A549 (cell line): ENCODE measurements at regions of chr2 and their contacts with region 1.

Region 1: GRCh38 chr2:96276787-96277499 is 10.9 kb downstream of the CIAO1 start:
- DNase-seq: no peak
- ATAC-seq: no peak
- H3K4me3 ChIP-seq: no peak overlapping the region
- H3K27ac ChIP-seq: no peak overlapping the region
- H3K4me1 ChIP-seq: no peaks in the 10 kb centered on the region
- CTCF ChIP-seq: no peak
- EP300 ChIP-seq: no peak
- POLR2A ChIP-seq: no peak
- RAD21 ChIP-seq: no peak

Region 2: GRCh38 chr2:96260404-96261260 is 16.3 kb before region 1 on chr2:
- CTCF ChIA-PET with region 1: no interaction called
- POLR2A ChIA-PET with region 1: no interaction called
- DNase-seq: peak; percentile 85 to 86
- ATAC-seq: peak; percentile 89 to 91
- H3K4me3 ChIP-seq: no peak overlapping the region
- H3K27ac ChIP-seq: peak overlapping the region; percentile 65 to 75
- H3K4me1 ChIP-seq: peaks cover 36% of the 10 kb centered on the region
- CTCF ChIP-seq: peak; percentile 66
- EP300 ChIP-seq: no peak
- POLR2A ChIP-seq: no peak
- RAD21 ChIP-seq: peak; percentile 29 to 53; a peak in 4 of 5 replicates

Region 3: DNA sequence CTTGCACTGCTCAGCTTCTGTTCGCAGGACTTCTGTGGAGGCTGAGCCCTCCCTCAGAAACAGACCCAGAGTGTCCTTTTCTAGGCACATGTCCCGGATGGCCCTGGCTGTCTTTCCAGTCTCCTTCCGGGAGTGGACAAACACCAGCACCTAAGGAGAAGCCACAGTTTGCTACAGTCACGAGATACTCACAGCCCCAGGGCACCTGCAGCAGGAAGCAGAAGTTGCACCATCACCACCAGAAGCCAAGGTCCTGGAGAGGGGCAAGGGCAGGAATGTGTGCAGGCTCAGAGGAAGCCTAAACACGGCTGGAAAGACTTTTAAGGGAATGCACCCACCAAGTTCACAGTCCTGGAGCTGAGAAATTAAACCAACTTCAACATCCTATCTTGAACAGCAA is 14.8 kb after region 1 on chr2:
- CTCF ChIA-PET with region 1: interaction called, 10 read pairs
- POLR2A ChIA-PET with region 1: interaction called, 5 read pairs
- DNase-seq: no peak
- ATAC-seq: no peak
- H3K4me3 ChIP-seq: no peak overlapping the region
- H3K27ac ChIP-seq: no peak overlapping the region
- H3K4me1 ChIP-seq: no peaks in the 10 kb centered on the region
- CTCF ChIP-seq: no peak
- EP300 ChIP-seq: no peak
- POLR2A ChIP-seq: no peak
- RAD21 ChIP-seq: no peak